IMR-90 (cell line): ENCODE measurements at regions of chr14 and their contacts with region 1.

Region 1: DNA sequence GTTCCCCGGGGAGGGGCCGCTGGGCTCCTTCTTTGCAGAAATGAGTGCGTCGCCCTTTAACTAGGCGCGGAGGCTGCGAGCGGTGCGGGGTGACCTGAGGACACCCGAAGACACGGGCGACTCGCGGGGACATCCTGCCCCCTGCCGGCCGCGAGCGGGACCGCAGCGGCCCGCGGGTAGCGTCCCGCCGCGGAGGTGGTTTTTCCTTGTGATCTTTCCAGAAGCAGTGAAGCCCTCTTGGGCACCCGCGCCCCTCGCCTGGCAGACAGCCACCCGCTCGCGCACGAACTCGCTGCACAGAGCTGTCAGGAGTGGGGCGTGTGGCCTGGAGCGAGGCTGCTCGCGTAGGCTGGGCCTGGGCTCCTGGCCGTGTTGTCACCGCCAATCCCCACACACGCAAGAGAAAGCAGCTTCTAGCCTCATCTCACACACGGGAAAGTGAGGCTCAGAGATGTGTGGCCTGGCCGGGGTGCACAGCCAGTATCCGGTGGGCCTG is 67.2 kb downstream of the DIO3 start:
- DNase-seq: peak; percentile 36
- ATAC-seq: peak; percentile 99
- H3K4me3 ChIP-seq: peak overlapping the region; percentile 27
- H3K27ac ChIP-seq: no peak overlapping the region
- H3K4me1 ChIP-seq: no peaks in the 10 kb centered on the region
- H3K27me3 ChIP-seq: peaks cover 18% of the 10 kb centered on the region
- CTCF ChIP-seq: peak; percentile 93
- POLR2A ChIP-seq: no peak
- RAD21 ChIP-seq: peak; percentile 88

Region 2: GRCh38 chr14:100417466-100417865 is 1211.1 kb before region 1 on chr14:
- CTCF ChIA-PET with region 1: no interaction called
- POLR2A ChIA-PET with region 1: no interaction called
- dilution Hi-C with region 1: no loop called
- in situ Hi-C with region 1: no loop called
- intact Hi-C with region 1: loop called (anchors 1 kb)
- DNase-seq: peak; percentile 97
- ATAC-seq: peak; percentile 97
- H3K4me3 ChIP-seq: no peak overlapping the region
- H3K27ac ChIP-seq: 0 out of 2 replicates have a peak overlapping the region, but pooled peaks have one; percentile 5
- H3K4me1 ChIP-seq: peaks cover 10% of the 10 kb centered on the region
- H3K27me3 ChIP-seq: no peaks in the 10 kb centered on the region
- CTCF ChIP-seq: peak; percentile 96
- POLR2A ChIP-seq: peak; percentile 65
- RAD21 ChIP-seq: peak; percentile 98

Region 3: GRCh38 chr14:101072945-101073597 is 555.4 kb before region 1 on chr14:
- CTCF ChIA-PET with region 1: no interaction called
- POLR2A ChIA-PET with region 1: interaction called, 14 read pairs
- dilution Hi-C with region 1: no loop called
- in situ Hi-C with region 1: no loop called
- intact Hi-C with region 1: no loop called
- DNase-seq: peak; percentile 98
- ATAC-seq: peak; percentile 86
- H3K4me3 ChIP-seq: no peak overlapping the region
- H3K27ac ChIP-seq: peak overlapping the region; percentile 42
- H3K4me1 ChIP-seq: peaks cover 26% of the 10 kb centered on the region
- H3K27me3 ChIP-seq: peaks cover under 1% of the 10 kb centered on the region; the same call in 1 of the 2 replicates
- CTCF ChIP-seq: 0 out of 2 replicates have a peak, but pooled peaks have one; percentile 2
- POLR2A ChIP-seq: no peak
- RAD21 ChIP-seq: peak; percentile 47

Region 4: GRCh38 chr14:101083564-101084435 is 544.7 kb before region 1 on chr14:
- CTCF ChIA-PET with region 1: no interaction called
- POLR2A ChIA-PET with region 1: no interaction called
- dilution Hi-C with region 1: no loop called
- in situ Hi-C with region 1: no loop called
- intact Hi-C with region 1: loop called (anchors 5 kb)
- DNase-seq: no peak
- ATAC-seq: no peak; the same call in 1 of the 2 replicates
- H3K4me3 ChIP-seq: no peak overlapping the region
- H3K27ac ChIP-seq: no peak overlapping the region
- H3K4me1 ChIP-seq: no peaks in the 10 kb centered on the region
- H3K27me3 ChIP-seq: peaks cover 6% of the 10 kb centered on the region; the same call in 1 of the 2 replicates
- CTCF ChIP-seq: 0 out of 2 replicates have a peak, but pooled peaks have one; percentile 8
- POLR2A ChIP-seq: no peak
- RAD21 ChIP-seq: no peak

Region 5: GRCh38 chr14:101654051-101654450 is 25.5 kb after region 1 on chr14:
- CTCF ChIA-PET with region 1: no interaction called
- POLR2A ChIA-PET with region 1: no interaction called
- dilution Hi-C with region 1: no loop called
- in situ Hi-C with region 1: no loop called
- intact Hi-C with region 1: no loop called
- DNase-seq: no peak
- ATAC-seq: no peak
- H3K4me3 ChIP-seq: no peak overlapping the region
- H3K27ac ChIP-seq: no peak overlapping the region
- H3K4me1 ChIP-seq: no peaks in the 10 kb centered on the region
- H3K27me3 ChIP-seq: peaks cover 23% of the 10 kb centered on the region
- CTCF ChIP-seq: no peak
- POLR2A ChIP-seq: no peak
- RAD21 ChIP-seq: no peak

Region 6: GRCh38 chr14:102008891-102009290 is 380.4 kb after region 1 on chr14:
- CTCF ChIA-PET with region 1: no interaction called
- POLR2A ChIA-PET with region 1: no interaction called
- dilution Hi-C with region 1: no loop called
- in situ Hi-C with region 1: no loop called
- intact Hi-C with region 1: no loop called
- DNase-seq: no peak
- ATAC-seq: no peak
- H3K4me3 ChIP-seq: no peak overlapping the region
- H3K27ac ChIP-seq: no peak overlapping the region
- H3K4me1 ChIP-seq: no peaks in the 10 kb centered on the region
- H3K27me3 ChIP-seq: no peaks in the 10 kb centered on the region
- CTCF ChIP-seq: no peak
- POLR2A ChIP-seq: no peak
- RAD21 ChIP-seq: no peak